Esophagus squamous epithelium (tissue), 5 donors: ENCODE measurements at regions of chr15 and their contacts with region 1.

Region 1: GRCh38 chr15:86689006-86689405 is 609.3 kb downstream of the AGBL1 start:
- DNase-seq: no peak
- H3K4me3 ChIP-seq: no peak overlapping the region
- H3K27ac ChIP-seq: no peak overlapping the region
- H3K4me1 ChIP-seq: no peaks in the 10 kb centered on the region
- H3K27me3 ChIP-seq: no peaks in the 10 kb centered on the region
- CTCF ChIP-seq: no peak
- POLR2A ChIP-seq: no peak

Region 2: DNA sequence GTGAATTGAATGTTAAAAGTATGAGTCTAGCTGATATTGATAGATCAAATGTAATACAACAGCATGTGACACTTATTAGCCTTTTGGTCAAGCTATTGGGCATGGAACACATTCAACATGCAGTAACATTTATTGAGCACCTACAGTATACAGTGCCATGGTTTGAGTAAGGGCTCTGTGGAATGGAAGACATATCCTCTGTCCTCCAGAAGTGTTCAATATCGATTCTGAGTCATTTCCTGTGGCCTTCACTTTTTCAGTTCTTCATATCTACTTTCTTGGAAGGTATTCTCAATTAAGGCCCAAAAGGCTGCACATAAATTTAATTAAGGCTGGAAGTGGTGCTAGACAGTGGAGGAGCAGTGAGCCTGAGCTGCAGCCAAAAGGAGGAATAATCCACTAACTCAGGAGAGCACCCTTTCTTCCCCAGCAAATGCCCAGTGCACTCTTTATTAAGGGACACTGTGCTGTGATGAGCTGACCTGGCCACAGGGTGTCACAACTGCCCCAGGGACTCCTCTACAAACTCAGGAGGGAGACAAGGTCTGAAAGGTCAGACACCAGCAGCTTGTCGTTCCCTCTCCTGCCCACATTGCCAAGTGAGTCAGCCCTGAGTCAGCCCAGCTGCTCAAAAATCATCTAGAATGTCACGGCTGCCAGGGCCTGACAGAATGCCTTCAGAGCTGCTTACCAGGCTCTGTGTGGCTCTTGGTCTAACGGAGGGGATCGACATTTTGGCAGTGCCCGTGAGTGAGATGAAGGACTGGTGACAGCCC is 64.6 kb before region 1 on chr15:
- intact Hi-C with region 1: loop called (anchors 10 kb)
- DNase-seq: peak; percentile 3
- H3K4me3 ChIP-seq: no peak overlapping the region
- H3K27ac ChIP-seq: no peak overlapping the region
- H3K4me1 ChIP-seq: peaks cover 0 to 16% (median 7%) of the 10 kb centered on the region in 3 donors
- H3K27me3 ChIP-seq: no peaks in the 10 kb centered on the region
- CTCF ChIP-seq: peak in 5 of 6 experiments; percentile 14 to 70 (median 51)
- POLR2A ChIP-seq: no peak